Motor neuron (in vitro differentiated cells): ENCODE measurements at regions of chr1 and their contacts with region 1.

Region 1: DNA sequence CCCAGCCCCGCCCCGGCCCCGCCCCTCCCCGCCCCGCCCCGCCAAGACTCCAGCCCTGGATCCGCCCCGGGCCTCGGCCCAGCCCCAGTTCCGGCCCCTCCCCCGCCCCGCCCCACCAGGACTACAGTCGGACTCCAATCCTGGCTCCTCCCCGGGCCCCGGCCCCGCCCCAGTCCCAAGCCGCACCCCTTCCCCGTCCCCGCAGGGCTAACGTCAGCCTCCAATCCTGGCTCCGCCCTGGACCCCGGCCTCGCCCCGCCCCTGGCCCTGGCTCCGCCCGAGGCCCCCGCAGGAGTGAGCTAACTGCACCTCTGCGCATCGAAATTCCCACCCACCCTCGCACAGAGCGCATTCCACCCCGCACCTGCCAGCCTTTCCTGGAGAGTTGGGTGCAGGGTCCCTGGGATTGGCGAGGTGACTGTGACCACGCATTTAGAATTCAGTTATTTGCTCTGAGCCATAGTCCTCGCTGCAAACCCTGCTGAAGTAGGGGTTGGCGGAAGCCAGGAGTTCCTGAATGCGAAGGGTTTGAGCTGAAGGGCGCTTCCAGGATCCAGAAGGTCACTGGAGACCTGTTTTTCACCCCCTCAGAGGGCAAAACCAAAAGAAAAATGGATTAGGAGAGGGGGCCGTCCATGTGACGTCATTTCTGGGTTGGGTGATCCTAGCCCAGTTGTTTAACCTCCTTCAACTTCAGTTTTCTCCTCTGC is 588 bp upstream of the IGSF8 start:
- ATAC-seq: peak; percentile 35 to 84 (median 74)
- H3K4me3 ChIP-seq: peak overlapping the region; percentile 20 to 81 (median 29)
- H3K27ac ChIP-seq: peak overlapping the region; percentile 37 to 57
- H3K4me1 ChIP-seq: peaks cover 55 to 58% of the 10 kb centered on the region in 2 donors

Region 2: GRCh38 chr1:159678939-159679338 is 420.1 kb before region 1 on chr1:
- in situ Hi-C with region 1: no loop called
- ATAC-seq: no peak
- H3K4me3 ChIP-seq: no peak overlapping the region
- H3K27ac ChIP-seq: no peak overlapping the region
- H3K4me1 ChIP-seq: no peaks in the 10 kb centered on the region

Region 3: DNA sequence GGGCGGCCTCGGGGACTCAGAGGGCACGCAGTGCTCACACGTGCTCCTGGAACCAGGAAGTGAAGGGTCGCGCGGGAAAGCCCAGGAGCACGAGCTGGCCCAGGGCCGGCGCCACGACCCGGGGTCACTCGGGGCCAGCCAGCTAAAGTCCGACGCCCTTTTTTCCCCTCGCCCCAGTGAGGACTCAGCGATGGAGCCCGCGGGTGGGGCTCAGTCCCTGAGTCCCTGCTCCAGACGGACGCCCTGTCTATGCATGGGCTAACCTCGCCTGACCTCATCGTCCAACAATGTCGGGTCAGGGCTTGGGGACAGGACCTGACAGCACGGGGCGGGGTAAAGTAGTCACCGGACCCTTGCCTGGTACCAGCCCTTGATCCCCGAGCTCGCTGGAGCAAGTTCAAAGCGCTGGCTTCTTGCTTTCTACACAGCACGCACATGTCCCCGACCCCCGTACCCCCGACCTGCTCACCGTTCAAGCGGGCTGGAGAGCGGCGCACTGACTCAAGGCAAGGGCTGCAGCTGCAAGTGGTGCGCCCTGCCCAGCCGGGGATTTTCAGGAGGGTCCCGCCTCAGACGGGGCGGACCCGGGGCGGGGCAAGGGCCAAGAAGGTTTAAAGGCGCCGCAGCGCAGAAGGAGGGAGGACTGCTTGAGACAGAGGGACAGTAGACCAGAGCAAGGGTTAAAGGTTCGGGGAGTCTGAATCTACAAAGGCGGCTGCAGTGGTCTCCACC is 173.9 kb before region 1 on chr1 and contains the start of gene TAGLN2:
- in situ Hi-C with region 1: loop called in 2 of 9 experiments (anchors 25 kb)
- ATAC-seq: peak; percentile 44 to 78 (median 74)
- H3K4me3 ChIP-seq: peak within 1 kb of the TSS; percentile 24 to 43 (median 40)
- H3K27ac ChIP-seq: peak within 1 kb of the TSS in 1 of 2 donors; percentile 12
- H3K4me1 ChIP-seq: peaks cover 23 to 31% of the 10 kb centered on the region in 2 donors
- total RNA-seq, gene TAGLN2: 9.4 to 296 (median 93.0) TPM

Region 4: GRCh38 chr1:160046494-160047110 is 52.4 kb before region 1 on chr1:
- in situ Hi-C with region 1: no loop called
- ATAC-seq: peak; percentile 61 to 94 (median 82)
- H3K4me3 ChIP-seq: no peak overlapping the region
- H3K27ac ChIP-seq: no peak overlapping the region
- H3K4me1 ChIP-seq: peaks cover 8 to 27% of the 10 kb centered on the region in 2 donors

Region 5: GRCh38 chr1:160205242-160206035 is 106.4 kb after region 1 on chr1 and contains the start of gene PEA15:
- in situ Hi-C with region 1: loop called in 1 of 9 experiments (anchors 25 kb)
- ATAC-seq: peak; percentile 54 to 84 (median 64)
- H3K4me3 ChIP-seq: peak within 1 kb of the TSS; percentile 82 to 99 (median 96)
- H3K27ac ChIP-seq: peak within 1 kb of the TSS; percentile 68 to 69
- H3K4me1 ChIP-seq: peaks cover 42 to 46% of the 10 kb centered on the region in 2 donors
- total RNA-seq, gene PEA15: 26.4 to 322 (median 66.3) TPM

Region 6: GRCh38 chr1:160354388-160354985 is 255.5 kb after region 1 on chr1:
- in situ Hi-C with region 1: loop called in 1 of 9 experiments (anchors 25 kb)
- ATAC-seq: peak; percentile 35 to 77 (median 60)
- H3K4me3 ChIP-seq: no peak overlapping the region
- H3K27ac ChIP-seq: no peak overlapping the region
- H3K4me1 ChIP-seq: no peaks in the 10 kb centered on the region

Region 7: GRCh38 chr1:160376525-160377131 is 277.6 kb after region 1 on chr1:
- in situ Hi-C with region 1: loop called in 2 of 9 experiments (anchors 25 kb)
- ATAC-seq: peak; percentile 67 to 95 (median 78)
- H3K4me3 ChIP-seq: no peak overlapping the region
- H3K27ac ChIP-seq: peak overlapping the region; percentile 74 to 82
- H3K4me1 ChIP-seq: peaks cover 26 to 28% of the 10 kb centered on the region in 2 donors

Region 8: GRCh38 chr1:160416369-160416768 is 317.4 kb after region 1 on chr1:
- in situ Hi-C with region 1: no loop called
- ATAC-seq: peak; percentile 44 to 89 (median 70)
- H3K4me3 ChIP-seq: no peak overlapping the region
- H3K27ac ChIP-seq: peak overlapping the region in 1 of 2 donors; percentile 4
- H3K4me1 ChIP-seq: peaks cover 34 to 45% of the 10 kb centered on the region in 2 donors